Activated CD8-positive, alpha-beta T cell treated with anti-CD3 and anti-CD28 coated beads for 36 hours (primary cell): ENCODE measurements at regions of chr7 and their contacts with region 1.

Region 1: DNA sequence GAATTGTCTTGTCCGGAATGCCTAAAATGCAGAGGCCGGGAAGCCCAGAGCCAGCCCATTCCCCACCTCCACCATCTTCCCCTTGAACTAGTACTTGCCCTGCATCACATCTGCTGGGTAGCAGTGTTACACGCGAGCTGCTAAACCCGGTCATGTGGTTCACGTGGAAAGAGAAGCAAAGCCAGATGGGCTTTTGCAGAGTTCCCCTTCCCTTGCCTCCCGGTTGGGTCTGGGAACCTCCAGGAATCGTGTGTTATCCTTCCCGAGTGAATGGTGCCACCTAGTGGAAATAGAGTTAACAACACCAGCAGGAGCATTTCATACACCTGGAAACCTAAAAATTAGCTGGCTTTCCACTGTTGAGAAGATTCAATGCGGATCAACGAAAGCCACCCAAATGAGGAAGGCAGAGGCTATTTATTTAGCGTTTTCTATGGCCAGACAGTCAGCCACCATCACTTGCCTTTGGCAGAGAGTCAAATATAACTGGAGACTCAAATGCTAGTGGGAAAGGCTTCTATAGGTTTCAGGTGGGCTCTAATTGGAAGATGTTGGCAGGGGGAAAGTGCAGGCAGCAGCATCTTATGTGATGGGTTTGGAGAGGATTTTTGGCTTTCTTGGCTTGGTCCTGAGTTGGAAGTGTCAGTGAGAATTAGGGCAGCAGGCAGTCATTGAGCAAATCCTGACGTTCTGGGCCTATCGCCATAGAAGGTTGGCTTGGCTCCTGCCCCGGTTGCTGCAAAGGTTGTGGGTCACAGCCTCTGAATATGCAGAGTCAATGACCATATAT is 12.9 kb upstream of the DENND2A start:
- DNase-seq: no peak
- ATAC-seq: peak; percentile 24
- H3K4me3 Mint-ChIP-seq: no peak overlapping the region
- H3K27ac Mint-ChIP-seq: no peak overlapping the region
- H3K4me1 Mint-ChIP-seq: peaks cover 17% of the 10 kb centered on the region
- H3K27me3 Mint-ChIP-seq: peaks cover 8% of the 10 kb centered on the region
- CTCF ChIP-seq: peak; percentile 94

Region 2: GRCh38 chr7:140200061-140200989 is 453.2 kb before region 1 on chr7:
- CTCF ChIA-PET with region 1: no interaction called
- POLR2A ChIA-PET with region 1: no interaction called
- intact Hi-C with region 1: no loop called
- DNase-seq: no peak
- ATAC-seq: no peak
- H3K4me3 Mint-ChIP-seq: no peak overlapping the region
- H3K27ac Mint-ChIP-seq: no peak overlapping the region
- H3K4me1 Mint-ChIP-seq: no peaks in the 10 kb centered on the region
- H3K27me3 Mint-ChIP-seq: no peaks in the 10 kb centered on the region
- CTCF ChIP-seq: no peak

Region 3: DNA sequence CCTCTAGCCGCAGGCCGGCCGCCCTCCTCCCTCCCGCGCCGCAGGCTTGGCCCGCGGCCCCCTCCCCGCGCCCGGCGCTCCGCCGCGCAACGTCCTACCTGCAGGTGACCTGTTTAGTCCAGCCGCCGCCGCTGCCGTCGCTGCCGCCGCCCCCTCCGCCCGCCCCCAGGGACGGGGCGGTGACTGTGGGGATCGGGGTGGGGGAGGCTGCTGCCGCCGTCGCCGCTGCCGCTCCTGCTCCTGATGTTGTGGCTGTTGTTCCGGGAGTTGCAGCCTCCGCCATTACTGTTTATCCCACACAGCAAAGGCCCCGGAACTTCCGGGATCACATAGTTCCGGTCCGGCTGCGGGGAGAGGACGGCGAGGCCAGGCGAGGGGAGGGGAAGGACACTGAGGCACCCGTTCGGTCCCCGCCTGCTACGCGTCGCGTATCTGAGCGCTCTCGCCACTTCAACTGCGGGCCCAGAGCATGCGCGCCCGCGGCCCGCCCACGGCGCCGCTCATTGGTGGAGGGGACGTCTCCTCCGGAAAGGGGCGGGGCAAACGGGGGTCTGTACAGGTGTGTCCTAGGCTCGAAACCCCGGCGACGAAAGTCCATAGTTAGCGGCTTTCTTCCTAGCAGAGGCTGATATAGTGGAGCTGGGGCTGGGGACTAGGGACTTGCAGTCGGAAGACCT is 174.3 kb before region 1 on chr7 and contains the start of gene MKRN1:
- CTCF ChIA-PET with region 1: interaction called, 7 read pairs
- POLR2A ChIA-PET with region 1: no interaction called
- intact Hi-C with region 1: loop called (anchors 5 kb)
- DNase-seq: peak; percentile 95
- ATAC-seq: peak; percentile 95
- H3K4me3 Mint-ChIP-seq: peak within 1 kb of the TSS; percentile 99
- H3K27ac Mint-ChIP-seq: peak within 1 kb of the TSS; percentile 94
- H3K4me1 Mint-ChIP-seq: peaks cover 24% of the 10 kb centered on the region
- H3K27me3 Mint-ChIP-seq: no peaks in the 10 kb centered on the region
- CTCF ChIP-seq: no peak
- total RNA-seq, gene MKRN1: 55.5 to 56.4 TPM

Region 4: DNA sequence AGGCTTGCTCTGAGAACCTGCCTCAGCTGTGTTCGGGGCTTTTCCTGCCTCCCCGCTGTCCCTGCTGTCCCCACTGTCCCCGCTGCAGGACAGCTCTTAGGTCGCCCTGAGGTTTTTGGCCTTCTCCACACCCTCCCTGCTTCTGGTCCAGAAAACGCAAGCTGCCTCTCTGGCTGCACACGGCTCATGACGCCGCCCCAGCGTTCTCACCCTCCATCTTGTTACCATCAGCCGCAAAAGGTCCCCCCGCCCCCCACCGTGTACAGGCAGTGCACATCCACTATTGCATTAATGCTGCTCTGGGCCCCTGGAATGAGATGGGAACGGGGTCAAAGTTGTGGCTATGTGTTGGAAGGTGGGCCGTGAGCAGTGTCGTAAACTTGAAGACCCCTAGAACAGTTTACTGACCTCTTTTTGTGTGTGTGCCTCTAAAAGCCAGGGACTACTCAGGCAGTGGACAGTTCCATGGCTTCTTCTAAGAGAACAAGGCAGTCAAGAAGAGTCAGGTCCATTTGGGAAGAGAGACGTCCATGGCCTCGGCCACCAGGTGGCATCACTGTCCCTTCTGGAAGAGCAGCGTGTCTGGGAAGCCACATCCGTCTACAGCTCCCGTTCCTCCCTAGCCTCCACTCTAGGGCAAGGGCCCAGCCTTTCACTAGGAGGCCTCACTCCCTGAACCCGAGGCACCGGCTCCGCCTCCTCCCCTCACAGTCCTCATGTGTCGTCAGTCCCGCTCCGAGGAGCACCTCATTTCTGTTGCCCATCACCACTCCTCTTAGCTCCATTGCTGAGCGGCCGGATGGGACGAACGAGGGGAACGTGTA is 135.8 kb before region 1 on chr7:
- CTCF ChIA-PET with region 1: interaction called, 22 read pairs
- POLR2A ChIA-PET with region 1: no interaction called
- intact Hi-C with region 1: loop called (anchors 1 kb)
- DNase-seq: peak; percentile 82
- ATAC-seq: peak; percentile 95
- H3K4me3 Mint-ChIP-seq: no peak overlapping the region
- H3K27ac Mint-ChIP-seq: no peak overlapping the region
- H3K4me1 Mint-ChIP-seq: no peaks in the 10 kb centered on the region
- H3K27me3 Mint-ChIP-seq: peaks cover 6% of the 10 kb centered on the region
- CTCF ChIP-seq: peak; percentile 75

Region 5: DNA sequence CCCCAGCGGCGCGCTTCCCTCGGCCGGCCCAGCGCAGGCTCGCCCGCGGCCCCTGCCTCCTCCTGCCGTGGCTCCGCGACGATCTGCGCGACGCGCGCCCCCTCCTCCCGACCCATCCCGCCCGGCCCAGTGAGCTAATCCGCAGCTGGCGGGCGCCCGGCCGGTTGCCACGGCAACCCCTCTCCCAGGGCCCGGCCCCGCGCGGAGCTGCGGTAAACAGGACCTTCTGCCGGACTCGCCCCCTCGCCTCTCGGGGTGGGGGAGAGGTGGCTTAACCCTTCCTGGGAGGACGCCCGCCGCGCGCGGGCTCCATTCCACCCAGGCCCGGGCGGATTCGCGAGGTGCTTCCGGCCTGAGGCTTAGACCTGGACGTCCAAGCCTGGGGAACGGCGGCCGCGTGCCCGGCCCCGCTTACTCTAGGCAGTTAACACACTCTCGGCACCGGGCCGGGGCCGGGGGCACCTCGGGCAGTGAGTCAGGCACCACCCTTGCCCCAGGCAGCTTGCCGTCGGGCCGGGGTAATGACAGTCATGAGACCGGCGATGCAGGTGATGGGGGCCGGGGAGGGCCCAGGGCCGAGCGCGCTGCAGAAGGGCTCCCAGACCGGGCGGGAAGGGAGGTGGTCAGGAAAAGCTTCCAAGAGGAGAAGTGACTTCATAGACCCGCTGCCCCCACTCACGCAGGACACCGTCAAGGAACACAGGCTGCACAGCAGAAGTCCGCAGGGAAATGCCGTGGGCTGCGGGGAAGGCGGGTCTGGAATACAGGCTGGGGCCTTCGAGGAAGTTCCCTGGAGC is 12.6 kb before region 1 on chr7 and contains the start of gene DENND2A:
- CTCF ChIA-PET with region 1: interaction called, 11 read pairs
- POLR2A ChIA-PET with region 1: interaction called, 3 read pairs
- intact Hi-C with region 1: no loop called
- DNase-seq: no peak
- ATAC-seq: peak; percentile 26
- H3K4me3 Mint-ChIP-seq: peak within 1 kb of the TSS; percentile 65
- H3K27ac Mint-ChIP-seq: no peak within 1 kb of the TSS
- H3K4me1 Mint-ChIP-seq: peaks cover 14% of the 10 kb centered on the region
- H3K27me3 Mint-ChIP-seq: peaks cover 47% of the 10 kb centered on the region
- CTCF ChIP-seq: no peak
- total RNA-seq, gene DENND2A: not detected

Region 6: DNA sequence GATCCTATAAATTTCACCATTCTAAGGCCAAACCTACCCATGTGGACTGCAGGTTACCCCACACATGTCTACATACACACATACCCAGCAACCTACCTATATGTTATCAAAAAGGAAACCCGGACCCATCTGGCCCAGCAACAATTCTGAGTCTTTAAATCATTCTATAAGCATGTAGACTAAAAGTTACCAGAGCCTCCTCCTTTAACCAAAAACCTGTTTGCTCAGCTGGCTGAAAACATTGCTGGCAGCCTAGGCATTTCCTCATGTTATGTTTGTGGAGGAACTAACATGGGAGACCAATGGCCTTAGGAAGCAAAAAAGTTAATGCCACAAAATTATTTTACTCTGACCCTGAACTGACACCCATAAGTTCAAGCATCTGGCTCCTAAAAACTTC is 14.0 kb after region 1 on chr7:
- CTCF ChIA-PET with region 1: interaction called, 19 read pairs
- POLR2A ChIA-PET with region 1: no interaction called
- intact Hi-C with region 1: no loop called
- DNase-seq: no peak
- ATAC-seq: no peak
- H3K4me3 Mint-ChIP-seq: no peak overlapping the region
- H3K27ac Mint-ChIP-seq: no peak overlapping the region
- H3K4me1 Mint-ChIP-seq: peaks cover 6% of the 10 kb centered on the region
- H3K27me3 Mint-ChIP-seq: no peaks in the 10 kb centered on the region
- CTCF ChIP-seq: no peak